Heart left ventricle (tissue), 16 donors: ENCODE measurements at regions of chr2 and their contacts with region 1.

Region 1: DNA sequence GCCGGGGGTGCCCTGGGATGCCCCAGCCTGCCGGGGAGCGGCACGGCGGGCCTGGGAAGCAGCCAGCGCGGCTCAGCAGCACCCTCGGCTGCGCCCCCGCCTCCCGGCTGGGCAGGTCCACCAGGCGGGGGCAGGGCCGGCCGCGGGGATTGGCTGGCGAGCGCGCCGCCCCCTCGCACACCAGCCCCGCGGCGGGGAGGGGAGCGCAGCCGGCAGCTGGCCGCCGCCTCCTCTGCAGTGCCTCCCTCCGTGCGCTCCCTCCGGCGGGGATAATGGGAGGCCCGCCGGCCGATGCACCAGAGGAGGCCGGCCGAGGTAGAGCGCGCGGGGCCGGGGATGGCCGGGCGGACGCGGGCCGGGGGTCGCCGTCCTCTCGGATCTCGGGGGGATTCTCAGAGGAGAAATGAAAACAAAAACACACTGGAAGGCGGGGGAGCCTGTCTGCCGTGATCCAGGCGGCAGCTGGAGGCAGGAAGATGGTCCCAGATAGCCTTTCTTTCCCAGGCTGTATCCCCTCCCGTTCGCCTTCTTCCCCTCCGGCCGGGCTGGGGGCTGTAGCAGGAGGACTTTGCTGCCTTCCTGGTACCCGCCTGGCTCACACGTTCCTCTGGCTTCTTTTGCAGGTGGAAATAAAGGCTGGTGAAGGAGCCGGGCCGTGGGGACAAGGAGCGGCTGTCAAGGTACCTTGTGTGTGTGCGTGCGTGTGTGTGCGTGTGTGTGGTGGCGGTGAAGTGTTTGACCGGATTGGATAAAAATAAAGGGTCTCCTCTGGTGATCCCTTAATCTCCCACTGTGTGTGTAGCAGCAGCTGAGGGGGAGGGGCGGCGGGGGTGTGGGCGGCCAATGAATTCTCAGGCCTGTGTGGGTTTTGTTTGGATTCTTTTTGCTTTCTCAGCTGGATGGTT is 18.0 kb downstream of the TET3 start:
- DNase-seq: peak; percentile 90 to 94 (median 90)
- ATAC-seq: peak; percentile 88 to 99 (median 96)
- H3K4me3 ChIP-seq: peak overlapping the region; percentile 45 to 78 (median 62)
- H3K27ac ChIP-seq: peak overlapping the region in 11 of 12 donors; percentile 20 to 67 (median 55)
- H3K4me1 ChIP-seq: peaks cover 0 to 77% (median 42%) of the 10 kb centered on the region in 12 donors
- H3K27me3 ChIP-seq: no peaks in the 10 kb centered on the region
- CTCF ChIP-seq: peak in 3 of 12 donors; percentile 5 to 48 (median 11)
- POLR2A ChIP-seq: peak; percentile 66 to 85

Region 2: GRCh38 chr2:73651586-73652230 is 351.0 kb before region 1 on chr2:
- intact Hi-C with region 1: no loop called
- DNase-seq: no peak
- ATAC-seq: no peak
- H3K4me3 ChIP-seq: no peak overlapping the region
- H3K27ac ChIP-seq: no peak overlapping the region
- H3K4me1 ChIP-seq: no peaks in the 10 kb centered on the region
- H3K27me3 ChIP-seq: no peaks in the 10 kb centered on the region
- CTCF ChIP-seq: no peak
- POLR2A ChIP-seq: no peak

Region 3: GRCh38 chr2:74080346-74080745 is 77.6 kb after region 1 on chr2:
- intact Hi-C with region 1: loop called in 4 of 10 experiments (anchors 5 to 10 kb)
- DNase-seq: no peak
- ATAC-seq: peak in 2 of 4 donors; percentile 21 to 23
- H3K4me3 ChIP-seq: no peak overlapping the region
- H3K27ac ChIP-seq: peak overlapping the region in 1 of 12 donors; percentile 33
- H3K4me1 ChIP-seq: peaks cover 0 to 30% (median 21%) of the 10 kb centered on the region in 12 donors
- H3K27me3 ChIP-seq: no peaks in the 10 kb centered on the region
- CTCF ChIP-seq: peak in 4 of 12 donors; percentile 12 to 24 (median 22)
- POLR2A ChIP-seq: no peak

Region 4: DNA sequence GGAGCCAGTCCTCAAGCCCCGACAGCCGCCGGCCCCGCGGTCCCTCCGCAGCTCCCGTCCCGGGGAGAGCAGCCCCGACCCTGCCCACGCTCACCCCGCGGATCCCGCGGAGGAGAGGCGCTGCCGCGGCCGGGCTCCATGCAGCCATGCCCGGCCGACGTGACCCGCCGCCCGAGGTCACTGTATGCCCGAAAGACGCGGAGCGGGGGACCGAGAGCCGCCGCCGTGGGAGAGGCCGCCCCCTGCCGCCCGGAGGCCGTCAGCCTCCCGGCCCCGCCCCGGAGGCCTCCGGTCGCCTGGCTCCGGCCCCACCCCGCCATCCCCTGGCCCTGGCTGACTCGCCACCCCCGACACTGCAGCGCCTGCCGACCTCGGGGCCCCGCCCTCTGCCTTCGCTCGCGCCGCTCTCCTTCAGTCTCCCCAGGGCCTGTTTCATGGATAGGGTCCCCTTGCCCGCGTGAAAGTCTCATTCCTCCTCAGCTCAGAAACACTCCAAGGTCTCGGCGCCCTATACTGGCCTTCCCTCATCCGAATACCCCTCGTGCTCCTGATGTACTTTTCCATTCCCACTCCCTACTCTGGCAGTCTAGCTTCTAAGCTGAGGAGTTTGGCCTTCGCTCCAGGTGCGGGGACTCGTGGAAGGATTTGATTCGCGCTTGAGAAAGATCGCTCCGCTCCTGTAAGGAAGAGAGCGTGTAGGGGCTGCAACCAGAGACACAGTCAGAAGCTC is 145.2 kb after region 1 on chr2 and contains the start of gene BOLA3:
- intact Hi-C with region 1: loop called in 1 of 10 experiments (anchors 10 kb)
- DNase-seq: peak; percentile 89 to 94 (median 90)
- ATAC-seq: peak; percentile 76 to 99 (median 97)
- H3K4me3 ChIP-seq: peak within 1 kb of the TSS; percentile 66 to 99 (median 88)
- H3K27ac ChIP-seq: peak within 1 kb of the TSS in 11 of 12 donors; percentile 62 to 81 (median 74)
- H3K4me1 ChIP-seq: peaks cover 3 to 25% (median 16%) of the 10 kb centered on the region in 12 donors
- H3K27me3 ChIP-seq: no peaks in the 10 kb centered on the region
- CTCF ChIP-seq: peak; percentile 59 to 95 (median 82)
- POLR2A ChIP-seq: peak in 1 of 2 donors; percentile 58
- total RNA-seq, gene BOLA3: 52.2 to 165 (median 65.3) TPM